ENCODE measurements at regions of chr1 and their contacts with region 1.

Region 1: GRCh38 chr1:92310185-92310597 is 11.3 kb downstream of the RPAP2 start:
- DNase-seq: peak; percentile 16
- H3K4me3 ChIP-seq: no peak overlapping the region
- H3K27ac ChIP-seq: no peak overlapping the region
- H3K4me1 ChIP-seq: no peaks in the 10 kb centered on the region
- H3K27me3 ChIP-seq: no peaks in the 10 kb centered on the region
- CTCF ChIP-seq: peak; percentile 50 to 56

Region 2: DNA sequence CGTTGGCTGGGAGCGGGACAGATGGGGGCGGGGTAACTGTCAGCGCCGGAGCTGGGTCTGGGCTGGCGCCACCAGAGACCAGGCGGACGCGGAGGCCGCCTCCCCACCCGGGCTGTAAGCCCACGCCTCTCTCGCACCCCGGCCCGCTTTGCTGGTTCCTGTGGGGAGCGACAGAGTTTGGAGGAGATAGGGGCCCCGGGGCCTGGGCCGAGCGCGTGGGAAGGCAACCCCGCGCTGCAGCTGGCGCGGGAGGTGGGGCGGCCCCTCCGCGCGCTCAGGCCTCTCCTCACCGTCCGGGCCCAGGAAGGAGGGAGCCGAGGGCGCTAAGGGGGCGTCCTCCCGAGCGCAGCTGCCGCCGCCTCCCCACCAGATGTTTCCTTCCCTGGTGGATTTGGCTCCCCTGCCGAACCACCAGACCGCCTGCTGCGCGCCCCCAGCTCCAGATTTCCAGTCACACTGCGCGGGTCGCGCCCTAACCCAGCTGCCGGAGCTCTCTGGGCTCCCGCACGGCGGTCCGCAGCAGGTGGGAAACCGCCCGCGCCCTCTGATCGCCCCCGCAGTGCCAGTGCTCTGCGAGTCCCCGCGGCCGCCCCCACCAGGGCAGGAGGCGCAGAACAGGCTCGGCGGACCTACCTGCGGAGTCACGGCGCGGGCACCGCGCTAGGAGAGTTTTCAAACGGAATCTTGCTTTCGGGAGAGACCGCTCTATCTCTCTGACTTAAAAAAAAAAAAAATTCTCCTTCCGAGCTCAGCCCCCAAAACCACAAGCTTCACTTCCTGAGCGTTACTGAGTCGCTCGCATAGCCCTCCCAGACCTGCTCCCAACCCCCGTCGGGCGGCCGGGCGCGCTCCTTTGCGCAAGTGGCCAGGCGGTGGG is 175.4 kb after region 1 on chr1:
- CTCF ChIA-PET with region 1: interaction called, 5 read pairs
- dilution Hi-C with region 1: no loop called
- in situ Hi-C with region 1: no loop called
- intact Hi-C with region 1: loop called (anchors 10 kb)
- DNase-seq: peak; percentile 62
- H3K4me3 ChIP-seq: peak overlapping the region; percentile 44 to 51 (median 48)
- H3K27ac ChIP-seq: no peak overlapping the region
- H3K4me1 ChIP-seq: peaks cover 56% of the 10 kb centered on the region
- H3K27me3 ChIP-seq: peaks cover 60% of the 10 kb centered on the region
- CTCF ChIP-seq: peak; percentile 16 to 45

Region 3: GRCh38 chr1:92544756-92545165 is 234.6 kb after region 1 on chr1:
- CTCF ChIA-PET with region 1: no interaction called
- dilution Hi-C with region 1: no loop called
- in situ Hi-C with region 1: no loop called
- intact Hi-C with region 1: no loop called
- DNase-seq: no peak
- H3K4me3 ChIP-seq: no peak overlapping the region
- H3K27ac ChIP-seq: no peak overlapping the region
- H3K4me1 ChIP-seq: no peaks in the 10 kb centered on the region
- H3K27me3 ChIP-seq: no peaks in the 10 kb centered on the region
- CTCF ChIP-seq: no peak

Region 4: DNA sequence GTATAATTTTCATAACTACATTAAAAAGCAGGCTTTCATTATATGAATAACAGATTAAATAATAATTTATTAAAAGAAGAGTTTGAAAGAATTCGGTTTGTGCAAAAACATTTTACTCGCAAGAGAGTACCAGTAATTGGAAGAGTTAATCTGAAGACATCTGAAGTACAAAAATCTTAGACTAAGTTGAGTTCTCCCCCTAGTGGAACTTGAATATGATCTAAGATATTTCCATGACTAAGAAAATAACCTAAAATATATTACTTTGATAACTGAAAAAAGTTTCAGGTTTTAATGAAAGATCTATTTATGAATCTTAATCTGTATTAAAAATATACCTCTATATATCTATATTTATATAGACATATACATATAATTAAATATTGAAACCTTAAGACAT is 289.0 kb after region 1 on chr1:
- CTCF ChIA-PET with region 1: no interaction called
- dilution Hi-C with region 1: no loop called
- in situ Hi-C with region 1: loop called in 1 of 2 experiments (anchors 25 kb)
- intact Hi-C with region 1: loop called (anchors 1 kb)
- DNase-seq: no peak
- H3K4me3 ChIP-seq: no peak overlapping the region
- H3K27ac ChIP-seq: no peak overlapping the region
- H3K4me1 ChIP-seq: no peaks in the 10 kb centered on the region
- H3K27me3 ChIP-seq: no peaks in the 10 kb centered on the region
- CTCF ChIP-seq: peak; percentile 18 to 45

Region 5: DNA sequence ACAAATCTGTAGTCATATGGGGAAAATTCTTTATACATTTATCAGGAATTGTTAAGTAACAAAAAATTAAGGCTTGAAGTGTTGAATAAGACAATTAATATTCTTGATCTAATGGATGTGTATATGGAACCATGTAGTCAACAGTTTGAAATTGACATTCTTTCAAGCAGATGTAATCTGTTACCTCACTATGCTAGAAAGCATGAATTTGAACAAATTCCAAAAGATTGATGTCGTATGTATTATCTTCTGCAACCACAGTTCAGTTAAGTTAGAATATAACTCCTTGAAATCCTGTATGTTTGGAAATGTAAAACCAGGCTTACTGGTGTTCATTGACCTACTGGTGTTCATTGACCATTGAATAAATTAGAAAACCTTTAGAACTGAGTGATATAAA is 886.4 kb after region 1 on chr1:
- CTCF ChIA-PET with region 1: no interaction called
- dilution Hi-C with region 1: no loop called
- in situ Hi-C with region 1: no loop called
- intact Hi-C with region 1: no loop called
- DNase-seq: no peak
- H3K4me3 ChIP-seq: no peak overlapping the region
- H3K27ac ChIP-seq: no peak overlapping the region
- H3K4me1 ChIP-seq: no peaks in the 10 kb centered on the region
- H3K27me3 ChIP-seq: no peaks in the 10 kb centered on the region
- CTCF ChIP-seq: no peak

Measured in mammary epithelial cell (primary cell).